Mucosa of descending colon (tissue), 3 donors: ENCODE measurements at regions of chr12 and their contacts with region 1.

Region 1: GRCh38 chr12:131290255-131290959 is 336.7 kb downstream of the ADGRD1 start:
- DNase-seq: peak in 1 of 3 donors; percentile 7
- ATAC-seq: no peak
- H3K4me3 ChIP-seq: no peak overlapping the region
- H3K4me1 ChIP-seq: no peaks in the 10 kb centered on the region
- CTCF ChIP-seq: no peak

Region 2: DNA sequence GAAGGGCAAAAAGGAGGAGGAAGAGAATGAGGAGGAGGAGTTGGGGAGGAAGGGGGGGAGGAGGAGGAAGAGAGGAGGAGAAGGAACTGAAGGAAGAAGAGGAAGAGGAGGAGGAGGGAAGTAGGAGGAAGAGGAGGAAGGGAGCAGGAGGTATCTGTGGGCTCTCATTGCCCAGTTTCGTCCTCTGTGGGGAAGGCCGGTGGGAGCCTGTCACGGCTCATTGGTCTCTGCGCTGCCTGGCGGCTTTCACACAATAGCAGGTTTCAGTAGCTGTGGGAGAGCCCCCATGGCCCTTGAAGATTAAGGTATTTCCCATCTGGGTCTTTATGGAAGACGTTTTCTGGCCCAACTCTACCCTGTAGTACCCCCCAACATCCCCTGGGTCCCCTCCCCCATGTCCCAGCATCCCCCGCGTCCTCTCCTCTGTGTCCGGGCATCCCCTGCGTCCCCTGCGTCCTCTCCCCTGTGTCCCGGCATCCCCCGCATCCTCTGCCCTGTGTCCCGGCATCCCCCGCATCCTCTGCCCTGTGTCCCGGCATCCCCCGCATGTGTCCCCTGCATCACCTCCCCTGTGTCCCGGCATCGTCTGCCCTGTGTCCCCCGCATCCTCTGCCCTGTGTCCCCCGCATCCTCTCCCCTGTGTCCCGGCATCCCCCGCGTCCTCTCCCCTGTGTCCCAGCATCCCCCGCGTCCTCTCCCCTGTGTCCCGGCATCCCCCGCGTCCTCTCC is 142.3 kb after region 1 on chr12:
- intact Hi-C with region 1: no loop called
- DNase-seq: no peak
- ATAC-seq: no peak
- H3K4me3 ChIP-seq: no peak overlapping the region
- H3K4me1 ChIP-seq: no peaks in the 10 kb centered on the region
- CTCF ChIP-seq: no peak

Region 3: DNA sequence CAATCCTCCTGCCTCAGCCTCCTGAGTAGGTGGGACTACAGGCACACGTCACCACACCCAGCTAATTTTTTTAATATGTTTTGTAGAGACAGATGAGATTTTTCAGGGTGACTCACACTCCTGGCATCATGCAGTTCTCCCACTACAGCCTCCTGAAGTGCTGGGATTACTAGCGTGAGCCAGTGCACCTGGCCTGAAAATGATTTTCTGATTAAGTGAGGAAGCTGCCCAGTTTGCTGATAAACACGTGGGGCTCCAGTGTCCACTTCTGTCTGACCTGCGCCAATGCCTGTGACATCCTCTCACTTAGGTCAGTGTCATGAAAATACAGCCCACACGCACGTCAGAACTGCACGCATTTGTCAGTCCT is 383.5 kb after region 1 on chr12:
- intact Hi-C with region 1: loop called in 1 of 2 experiments (anchors 10 kb)
- DNase-seq: no peak
- ATAC-seq: no peak
- H3K4me3 ChIP-seq: no peak overlapping the region
- H3K4me1 ChIP-seq: no peaks in the 10 kb centered on the region
- CTCF ChIP-seq: no peak